ENCODE measurements at regions of chr2 and their contacts with region 1.

Region 1: DNA sequence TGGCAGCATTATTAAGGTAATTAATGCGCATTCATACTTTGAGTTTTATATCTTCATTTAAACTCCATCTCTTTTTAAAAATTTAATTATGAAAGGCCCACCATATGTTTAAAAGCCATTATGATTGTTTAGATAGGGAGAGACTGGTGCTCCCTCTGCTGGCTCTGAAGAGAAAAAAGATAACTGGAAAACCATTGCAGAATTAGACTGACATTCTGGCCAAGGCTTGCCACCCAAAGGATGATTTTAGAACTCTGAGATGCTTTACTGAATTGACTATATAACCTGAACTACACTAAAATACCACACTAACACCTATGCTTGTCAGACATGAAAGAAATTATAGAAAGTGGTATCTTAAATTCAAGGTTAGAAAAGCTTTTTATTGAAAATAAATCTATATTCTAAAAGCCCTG is 127.6 kb upstream of the SPOPL start:
- DNase-seq: peak; percentile 58
- ATAC-seq: peak; percentile 69
- H3K4me3 ChIP-seq: no peak overlapping the region
- H3K27ac ChIP-seq: no peak overlapping the region
- H3K4me1 ChIP-seq: no peaks in the 10 kb centered on the region
- H3K27me3 ChIP-seq: no peaks in the 10 kb centered on the region
- CTCF ChIP-seq: peak; percentile 77
- EP300 ChIP-seq: no peak
- POLR2A ChIP-seq: no peak
- RAD21 ChIP-seq: peak; percentile 74

Region 2: GRCh38 chr2:137677463-137677862 is 696.5 kb before region 1 on chr2:
- CTCF ChIA-PET with region 1: no interaction called
- POLR2A ChIA-PET with region 1: no interaction called
- in situ Hi-C with region 1: no loop called
- intact Hi-C with region 1: no loop called
- DNase-seq: no peak
- ATAC-seq: no peak
- H3K4me3 ChIP-seq: no peak overlapping the region
- H3K27ac ChIP-seq: no peak overlapping the region
- H3K4me1 ChIP-seq: no peaks in the 10 kb centered on the region
- H3K27me3 ChIP-seq: no peaks in the 10 kb centered on the region
- CTCF ChIP-seq: 0 out of 2 replicates have a peak, but pooled peaks have one; percentile 7
- EP300 ChIP-seq: no peak
- POLR2A ChIP-seq: no peak
- RAD21 ChIP-seq: no peak

Region 3: GRCh38 chr2:137888845-137889244 is 485.2 kb before region 1 on chr2:
- CTCF ChIA-PET with region 1: interaction called, 6 read pairs
- POLR2A ChIA-PET with region 1: no interaction called
- in situ Hi-C with region 1: no loop called
- intact Hi-C with region 1: loop called (anchors 1 kb)
- DNase-seq: peak; percentile 63
- ATAC-seq: peak; percentile 89
- H3K4me3 ChIP-seq: no peak overlapping the region
- H3K27ac ChIP-seq: no peak overlapping the region
- H3K4me1 ChIP-seq: peaks cover 23% of the 10 kb centered on the region
- H3K27me3 ChIP-seq: peaks cover 0 to 4% of the 10 kb centered on the region in 2 experiments; a peak in 1 of 5 replicates
- CTCF ChIP-seq: peak; percentile 96
- EP300 ChIP-seq: no peak
- POLR2A ChIP-seq: no peak
- RAD21 ChIP-seq: peak; percentile 77

Region 4: DNA sequence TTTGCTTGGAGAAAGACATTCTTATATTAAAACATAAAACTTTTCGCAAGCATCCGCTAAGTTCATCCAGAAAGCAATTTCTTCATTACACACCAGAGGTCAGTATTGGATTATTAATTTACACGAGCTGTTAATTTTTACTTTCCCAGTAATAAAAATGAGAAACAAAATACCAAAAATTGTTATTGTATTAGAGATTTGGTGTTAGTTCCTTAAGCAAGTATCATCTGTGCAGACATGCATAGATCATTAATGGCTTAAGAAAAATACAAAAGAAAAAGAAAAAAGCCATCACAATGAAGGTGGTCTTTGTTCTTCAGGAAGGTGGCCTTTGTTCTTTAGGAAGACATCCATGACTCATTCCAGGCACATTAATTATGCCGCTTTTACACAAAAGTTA is 463.4 kb before region 1 on chr2:
- CTCF ChIA-PET with region 1: interaction called, 17 read pairs
- POLR2A ChIA-PET with region 1: no interaction called
- in situ Hi-C with region 1: loop called (anchors 10 kb)
- intact Hi-C with region 1: loop called (anchors 1 kb)
- DNase-seq: peak; percentile 55
- ATAC-seq: no peak
- H3K4me3 ChIP-seq: no peak overlapping the region
- H3K27ac ChIP-seq: no peak overlapping the region
- H3K4me1 ChIP-seq: peaks cover 42% of the 10 kb centered on the region
- H3K27me3 ChIP-seq: no peaks in the 10 kb centered on the region
- CTCF ChIP-seq: peak; percentile 66
- EP300 ChIP-seq: peak in 1 of 2 experiments; percentile 30; a peak in 1 of 4 replicates
- POLR2A ChIP-seq: no peak
- RAD21 ChIP-seq: peak; percentile 84

Region 5: GRCh38 chr2:138090330-138090729 is 283.7 kb before region 1 on chr2:
- CTCF ChIA-PET with region 1: no interaction called
- POLR2A ChIA-PET with region 1: no interaction called
- in situ Hi-C with region 1: no loop called
- intact Hi-C with region 1: loop called (anchors 5 kb)
- DNase-seq: peak; percentile 64
- ATAC-seq: peak; percentile 97
- H3K4me3 ChIP-seq: no peak overlapping the region
- H3K27ac ChIP-seq: no peak overlapping the region
- H3K4me1 ChIP-seq: peaks cover 8% of the 10 kb centered on the region
- H3K27me3 ChIP-seq: no peaks in the 10 kb centered on the region
- CTCF ChIP-seq: peak; percentile 79
- EP300 ChIP-seq: no peak
- POLR2A ChIP-seq: no peak
- RAD21 ChIP-seq: peak; percentile 84

Region 6: GRCh38 chr2:138275881-138276280 is 98.1 kb before region 1 on chr2:
- CTCF ChIA-PET with region 1: no interaction called
- POLR2A ChIA-PET with region 1: no interaction called
- in situ Hi-C with region 1: no loop called
- intact Hi-C with region 1: loop called (anchors 5 kb)
- DNase-seq: peak; percentile 88
- ATAC-seq: peak; percentile 87
- H3K4me3 ChIP-seq: peak overlapping the region in 2 of 3 experiments; percentile 23 to 43; a peak in 3 of 6 replicates
- H3K27ac ChIP-seq: peak overlapping the region; percentile 53
- H3K4me1 ChIP-seq: peaks cover 70% of the 10 kb centered on the region
- H3K27me3 ChIP-seq: no peaks in the 10 kb centered on the region
- CTCF ChIP-seq: no peak
- EP300 ChIP-seq: peak in 1 of 2 experiments; percentile 67; a peak in 2 of 4 replicates
- POLR2A ChIP-seq: no peak
- RAD21 ChIP-seq: no peak

Region 7: GRCh38 chr2:138501425-138502283 is 127.7 kb after region 1 on chr2 and contains the start of gene SPOPL:
- CTCF ChIA-PET with region 1: interaction called, 3 read pairs
- POLR2A ChIA-PET with region 1: no interaction called
- in situ Hi-C with region 1: no loop called
- intact Hi-C with region 1: loop called (anchors 5 kb)
- DNase-seq: peak; percentile 87
- ATAC-seq: peak; percentile 92
- H3K4me3 ChIP-seq: peak within 1 kb of the TSS; percentile 78 to 94 (median 93)
- H3K27ac ChIP-seq: peak within 1 kb of the TSS; percentile 96
- H3K4me1 ChIP-seq: peaks cover 56% of the 10 kb centered on the region
- H3K27me3 ChIP-seq: no peaks in the 10 kb centered on the region; a peak in 1 of 5 replicates
- CTCF ChIP-seq: peak; percentile 38; the same call in 1 of the 2 replicates
- EP300 ChIP-seq: 0 out of 4 replicates have a peak, but pooled peaks of 1 of the 2 experiments have one; percentile 29
- POLR2A ChIP-seq: peak; percentile 85 to 93
- RAD21 ChIP-seq: peak; percentile 81
- total RNA-seq, gene SPOPL: 51.6 and 68.8 TPM in 2 replicates

Region 8: DNA sequence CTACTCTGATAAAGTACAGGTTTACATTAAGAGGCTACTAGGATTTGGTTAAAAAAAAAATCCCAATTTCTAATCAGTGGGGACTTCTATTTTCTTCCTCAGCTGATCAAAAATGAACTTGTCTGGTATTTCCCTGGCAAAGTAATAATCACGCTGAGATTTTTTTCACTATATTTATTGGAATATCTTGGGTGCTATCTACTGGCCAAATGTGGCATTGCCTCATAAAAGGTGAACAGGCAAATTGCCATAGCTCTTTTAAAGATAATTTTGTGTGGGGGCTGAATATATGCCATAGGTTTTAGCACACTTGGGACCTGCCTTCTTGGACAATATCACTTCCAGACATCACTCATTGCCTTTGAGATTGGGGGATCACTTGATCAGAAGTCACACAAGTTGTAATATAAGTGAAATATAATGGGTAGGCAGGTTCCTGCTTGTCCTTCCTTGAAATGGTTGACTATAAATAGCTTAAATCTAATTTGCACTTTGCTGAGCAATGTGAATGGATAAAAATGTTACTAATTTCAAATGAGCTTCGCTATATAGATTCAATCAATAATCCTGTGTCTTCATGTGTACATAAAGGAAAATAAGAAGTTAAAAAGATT is 413.2 kb after region 1 on chr2:
- CTCF ChIA-PET with region 1: no interaction called
- POLR2A ChIA-PET with region 1: no interaction called
- in situ Hi-C with region 1: no loop called
- intact Hi-C with region 1: loop called (anchors 2 kb)
- DNase-seq: peak; percentile 44
- ATAC-seq: peak; percentile 66
- H3K4me3 ChIP-seq: no peak overlapping the region
- H3K27ac ChIP-seq: no peak overlapping the region
- H3K4me1 ChIP-seq: no peaks in the 10 kb centered on the region
- H3K27me3 ChIP-seq: peaks cover 0 to 23% of the 10 kb centered on the region in 2 experiments; a peak in 2 of 5 replicates
- CTCF ChIP-seq: peak; percentile 79
- EP300 ChIP-seq: no peak
- POLR2A ChIP-seq: no peak
- RAD21 ChIP-seq: peak; percentile 56

Measured in HepG2 (cell line).